Activated CD4-positive, alpha-beta memory T cell treated with anti-CD3 and anti-CD28 coated beads, Interleukin-2, amount 10 ng/mL, durations not matched to agents 7 days and 5 days (primary cell): ENCODE measurements at regions of chr20 and their contacts with region 1.

Region 1: DNA sequence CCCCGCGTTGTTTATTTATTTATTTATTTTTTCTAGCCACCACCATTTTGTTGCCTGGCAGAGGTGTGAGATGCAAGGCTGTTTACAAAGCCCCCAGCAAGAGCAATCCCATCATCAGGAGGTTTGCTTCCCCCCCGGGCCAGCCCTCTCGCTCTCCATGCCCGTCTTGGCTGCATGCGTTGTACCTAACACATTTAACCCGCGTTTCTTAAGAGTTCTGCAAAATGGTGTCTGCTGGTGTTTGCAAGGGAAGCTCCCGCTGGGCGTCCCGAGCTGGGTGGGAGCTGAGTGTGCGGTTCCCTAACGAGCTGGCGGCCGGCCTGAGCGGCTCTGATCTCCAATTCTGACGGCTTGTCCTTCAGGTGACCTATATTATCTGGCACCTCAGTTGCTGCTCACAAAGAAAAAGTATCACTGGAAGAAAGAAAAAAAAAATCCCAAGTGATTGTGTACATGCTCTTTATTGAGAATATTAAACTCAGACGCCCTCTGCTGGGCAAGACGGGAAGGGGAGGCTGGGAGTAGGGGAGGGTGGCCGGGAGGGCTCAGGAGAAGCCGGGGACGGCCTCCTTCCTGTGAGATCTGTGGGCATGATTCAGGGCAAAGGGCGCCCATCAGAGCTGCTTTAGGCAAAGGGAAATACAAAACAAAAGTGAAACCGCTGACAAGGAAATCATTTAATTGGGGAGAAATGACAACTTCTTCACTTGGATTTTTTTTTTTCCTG is 154.8 kb downstream of the BCAS1 start:
- DNase-seq: peak; percentile 97
- H3K4me3 Mint-ChIP-seq: peak overlapping the region; percentile 86
- H3K27ac Mint-ChIP-seq: peak overlapping the region; percentile 79
- H3K4me1 Mint-ChIP-seq: peaks cover 39% of the 10 kb centered on the region
- H3K27me3 Mint-ChIP-seq: peaks cover 2% of the 10 kb centered on the region

Region 2: DNA sequence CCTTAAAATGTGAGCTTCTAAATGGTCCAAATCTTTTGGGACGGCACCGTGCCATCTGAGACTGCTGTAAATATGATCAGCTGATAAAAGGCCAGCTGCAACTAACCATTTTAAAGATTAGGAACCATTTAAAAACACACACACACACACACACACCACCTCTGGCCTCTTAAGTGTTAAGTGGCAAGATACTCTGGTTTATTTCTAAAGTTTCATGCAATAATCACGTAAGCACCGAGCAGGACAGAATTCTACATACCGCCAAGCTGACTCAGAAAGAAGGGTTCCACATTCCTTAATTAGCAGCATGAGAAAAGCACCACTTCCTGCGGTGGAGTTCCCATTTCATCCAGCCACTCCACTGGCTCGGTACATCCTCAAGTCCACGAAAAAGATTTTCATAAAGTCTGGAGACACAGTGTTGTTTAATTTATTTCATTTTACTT is 304.1 kb before region 1 on chr20:
- CTCF ChIA-PET with region 1: interaction called, 10 read pairs
- POLR2A ChIA-PET with region 1: interaction called, 10 read pairs
- DNase-seq: no peak
- H3K4me3 Mint-ChIP-seq: no peak overlapping the region
- H3K27ac Mint-ChIP-seq: no peak overlapping the region
- H3K4me1 Mint-ChIP-seq: peaks cover 32% of the 10 kb centered on the region
- H3K27me3 Mint-ChIP-seq: no peaks in the 10 kb centered on the region

Region 3: GRCh38 chr20:53883098-53883811 is 32.4 kb before region 1 on chr20:
- CTCF ChIA-PET with region 1: interaction called, 19 read pairs
- POLR2A ChIA-PET with region 1: interaction called, 4 read pairs
- DNase-seq: no peak
- H3K4me3 Mint-ChIP-seq: no peak overlapping the region
- H3K27ac Mint-ChIP-seq: no peak overlapping the region
- H3K4me1 Mint-ChIP-seq: peaks cover 43% of the 10 kb centered on the region
- H3K27me3 Mint-ChIP-seq: no peaks in the 10 kb centered on the region

Region 4: DNA sequence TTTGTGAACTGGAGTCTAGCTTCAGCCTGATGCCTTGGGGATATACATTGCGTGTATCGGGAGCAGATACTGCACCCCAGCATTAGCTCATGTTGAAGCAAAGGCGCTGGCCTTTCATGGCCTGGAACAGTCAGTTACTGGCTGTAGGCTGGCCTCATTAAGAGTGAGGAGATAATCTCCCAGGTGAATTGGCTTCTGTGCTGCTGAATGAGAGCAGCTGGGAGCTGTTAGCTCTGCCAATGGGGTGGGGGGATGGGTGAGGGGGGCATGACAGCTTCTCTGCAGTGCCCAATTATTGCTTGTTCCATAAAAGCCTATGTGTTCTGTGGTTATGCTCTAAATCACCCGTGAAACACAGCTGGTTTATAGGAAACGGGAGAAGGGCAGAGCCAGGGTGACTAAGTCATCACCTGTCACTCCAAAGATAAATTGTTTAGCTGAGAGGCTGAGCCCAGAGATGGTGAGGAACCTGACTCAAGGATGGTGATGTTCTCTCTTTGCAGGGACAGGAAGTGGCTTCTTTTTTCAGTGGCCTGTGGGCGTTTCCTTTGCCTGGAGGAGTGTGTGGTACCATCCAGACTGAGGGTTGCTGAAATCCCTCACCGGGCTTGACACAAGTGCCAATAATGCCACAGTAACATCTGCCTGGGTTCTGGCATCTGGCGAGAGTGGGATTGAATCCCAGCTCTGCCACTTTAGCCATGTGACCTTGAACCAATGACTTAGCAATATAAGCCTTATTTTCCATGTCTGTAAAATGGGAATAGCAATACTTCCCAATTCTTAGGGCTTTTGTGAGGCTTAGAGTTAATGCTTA is 16.1 kb before region 1 on chr20:
- CTCF ChIA-PET with region 1: interaction called, 49 read pairs
- POLR2A ChIA-PET with region 1: interaction called, 9 read pairs
- DNase-seq: peak; percentile 87
- H3K4me3 Mint-ChIP-seq: no peak overlapping the region
- H3K27ac Mint-ChIP-seq: peak overlapping the region; percentile 78
- H3K4me1 Mint-ChIP-seq: peaks cover 54% of the 10 kb centered on the region
- H3K27me3 Mint-ChIP-seq: no peaks in the 10 kb centered on the region

Region 5: DNA sequence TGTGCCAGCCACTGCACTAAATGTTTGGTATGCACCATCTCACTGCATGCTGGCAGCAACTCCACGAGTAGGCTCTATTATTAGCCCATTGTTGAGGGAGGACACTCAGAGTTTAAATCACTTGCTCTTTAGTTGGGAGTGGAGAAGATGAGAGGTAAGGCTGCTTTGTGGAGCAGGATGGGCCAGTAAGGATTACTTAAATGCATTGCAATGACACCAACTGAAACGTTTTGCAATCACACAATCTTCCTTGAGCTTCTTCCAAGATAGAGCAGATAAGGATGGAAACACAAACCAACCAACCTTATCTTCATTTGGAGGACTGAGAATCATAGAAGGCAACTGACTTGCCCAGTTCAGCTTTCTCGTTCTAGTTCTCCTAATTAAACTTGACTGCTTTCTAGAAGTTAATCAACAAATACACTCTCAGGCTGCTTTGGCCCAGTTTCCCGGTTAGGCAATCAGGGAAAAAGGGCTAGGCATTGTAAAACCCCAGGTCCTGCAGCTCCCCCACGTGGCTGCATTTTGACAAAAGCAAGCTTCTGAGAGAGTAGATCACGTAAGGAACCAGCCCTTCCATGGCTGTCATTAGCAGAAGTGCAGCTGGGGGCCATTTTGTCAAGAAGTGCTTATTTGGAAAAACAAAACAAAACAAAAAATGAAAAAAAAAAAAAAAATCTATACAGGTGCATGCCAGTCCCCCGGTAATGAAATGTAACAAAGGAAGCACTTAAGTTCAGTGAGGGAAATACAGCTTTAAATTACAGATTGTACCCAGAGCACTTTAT is 24.2 kb after region 1 on chr20:
- CTCF ChIA-PET with region 1: interaction called, 100 read pairs
- POLR2A ChIA-PET with region 1: interaction called, 5 read pairs
- DNase-seq: peak; percentile 81
- H3K4me3 Mint-ChIP-seq: no peak overlapping the region
- H3K27ac Mint-ChIP-seq: no peak overlapping the region
- H3K4me1 Mint-ChIP-seq: peaks cover 39% of the 10 kb centered on the region
- H3K27me3 Mint-ChIP-seq: no peaks in the 10 kb centered on the region

Region 6: GRCh38 chr20:53990768-53991450 is 75.3 kb after region 1 on chr20:
- CTCF ChIA-PET with region 1: no interaction called
- POLR2A ChIA-PET with region 1: no interaction called
- DNase-seq: no peak
- H3K4me3 Mint-ChIP-seq: no peak overlapping the region
- H3K27ac Mint-ChIP-seq: no peak overlapping the region
- H3K4me1 Mint-ChIP-seq: peaks cover 4% of the 10 kb centered on the region
- H3K27me3 Mint-ChIP-seq: peaks cover 39% of the 10 kb centered on the region